Esophagus muscularis mucosa (tissue), 4 donors: ENCODE measurements at regions of chr3 and their contacts with region 1.

Region 1: GRCh38 chr3:14548321-14548729 is 8.2 kb upstream of the GRIP2 start:
- DNase-seq: no peak
- H3K4me3 ChIP-seq: no peak overlapping the region
- H3K27ac ChIP-seq: no peak overlapping the region
- H3K4me1 ChIP-seq: peaks cover 4 to 10% (median 8%) of the 10 kb centered on the region in 4 donors
- H3K27me3 ChIP-seq: peaks cover 0 to 29% (median 0%) of the 10 kb centered on the region in 4 donors
- CTCF ChIP-seq: peak; percentile 50 to 63 (median 56)
- EP300 ChIP-seq: no peak
- POLR2A ChIP-seq: no peak

Region 2: GRCh38 chr3:14508961-14509795 is 39.1 kb before region 1 on chr3:
- intact Hi-C with region 1: loop called (anchors 5 kb)
- DNase-seq: no peak
- H3K4me3 ChIP-seq: peak overlapping the region in 1 of 4 donors; percentile 27
- H3K27ac ChIP-seq: no peak overlapping the region
- H3K4me1 ChIP-seq: peaks cover 4 to 7% (median 6%) of the 10 kb centered on the region in 4 donors
- H3K27me3 ChIP-seq: peaks cover 0 to 14% (median 0%) of the 10 kb centered on the region in 4 donors
- CTCF ChIP-seq: peak; percentile 69 to 96 (median 94)
- EP300 ChIP-seq: no peak
- POLR2A ChIP-seq: no peak